Mammary epithelial cell (primary cell): ENCODE measurements at regions of chr5 and their contacts with region 1.

Region 1: GRCh38 chr5:81045389-81045807 is 85.2 kb downstream of the RASGRF2 start:
- DNase-seq: no peak
- H3K4me3 ChIP-seq: no peak overlapping the region
- H3K27ac ChIP-seq: no peak overlapping the region
- H3K4me1 ChIP-seq: no peaks in the 10 kb centered on the region
- H3K27me3 ChIP-seq: peaks cover 7% of the 10 kb centered on the region
- CTCF ChIP-seq: no peak

Region 2: GRCh38 chr5:81014348-81014747 is 31.1 kb before region 1 on chr5:
- CTCF ChIA-PET with region 1: no interaction called
- dilution Hi-C with region 1: loop called (anchors 5 kb)
- in situ Hi-C with region 1: no loop called
- intact Hi-C with region 1: no loop called
- DNase-seq: peak; percentile 4
- H3K4me3 ChIP-seq: no peak overlapping the region
- H3K27ac ChIP-seq: no peak overlapping the region
- H3K4me1 ChIP-seq: peaks cover 4% of the 10 kb centered on the region
- H3K27me3 ChIP-seq: no peaks in the 10 kb centered on the region
- CTCF ChIP-seq: no peak